RWPE1 (cell line): ENCODE measurements at regions of chr5 and their contacts with region 1.

Region 1: GRCh38 chr5:158711927-158712529 is 387.7 kb downstream of the EBF1 start:
- DNase-seq: no peak
- H3K27ac ChIP-seq: no peak overlapping the region
- CTCF ChIP-seq: no peak

Region 2: DNA sequence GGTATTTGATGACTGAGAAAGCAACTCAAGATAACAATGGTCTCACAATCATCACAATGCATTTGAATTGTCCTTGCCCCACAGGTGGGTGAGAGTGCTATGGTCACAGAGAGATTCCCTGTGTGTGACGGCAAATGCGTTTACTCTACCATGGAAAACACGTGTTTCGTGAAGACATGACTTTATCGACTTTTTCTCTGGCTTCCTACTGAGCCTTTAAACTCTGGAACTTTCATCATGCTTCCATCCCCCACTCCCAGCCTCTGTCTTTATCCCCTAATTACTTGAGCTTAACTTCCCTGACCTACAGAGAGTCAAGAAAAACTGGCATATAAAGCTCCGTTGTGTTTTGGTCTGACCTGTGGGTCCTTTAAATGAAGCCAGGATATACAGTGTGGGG is 439.0 kb before region 1 on chr5:
- CTCF ChIA-PET with region 1: interaction called, 10 read pairs
- POLR2A ChIA-PET with region 1: no interaction called
- DNase-seq: no peak
- H3K27ac ChIP-seq: no peak overlapping the region
- CTCF ChIP-seq: no peak

Region 3: GRCh38 chr5:158802941-158803341 is 90.9 kb after region 1 on chr5:
- CTCF ChIA-PET with region 1: no interaction called
- POLR2A ChIA-PET with region 1: no interaction called
- DNase-seq: no peak
- H3K27ac ChIP-seq: no peak overlapping the region
- CTCF ChIP-seq: no peak